ENCODE measurements at regions of chr9 and their contacts with region 1.

Region 1: GRCh38 chr9:109110326-109111021 is 9.3 kb downstream of the TMEM245 start:
- DNase-seq: no peak
- H3K4me3 Mint-ChIP-seq: peak overlapping the region; percentile 44
- H3K27ac Mint-ChIP-seq: peak overlapping the region; percentile 75
- H3K4me1 Mint-ChIP-seq: peaks cover 82% of the 10 kb centered on the region
- H3K27me3 Mint-ChIP-seq: no peaks in the 10 kb centered on the region

Region 2: GRCh38 chr9:107243751-107244150 is 1866.7 kb before region 1 on chr9:
- CTCF ChIA-PET with region 1: no interaction called
- intact Hi-C with region 1: loop called (anchors 2 kb)
- DNase-seq: peak; percentile 79
- H3K4me3 Mint-ChIP-seq: no peak overlapping the region
- H3K27ac Mint-ChIP-seq: peak overlapping the region; percentile 73
- H3K4me1 Mint-ChIP-seq: peaks cover 33% of the 10 kb centered on the region
- H3K27me3 Mint-ChIP-seq: peaks cover 1% of the 10 kb centered on the region

Region 3: DNA sequence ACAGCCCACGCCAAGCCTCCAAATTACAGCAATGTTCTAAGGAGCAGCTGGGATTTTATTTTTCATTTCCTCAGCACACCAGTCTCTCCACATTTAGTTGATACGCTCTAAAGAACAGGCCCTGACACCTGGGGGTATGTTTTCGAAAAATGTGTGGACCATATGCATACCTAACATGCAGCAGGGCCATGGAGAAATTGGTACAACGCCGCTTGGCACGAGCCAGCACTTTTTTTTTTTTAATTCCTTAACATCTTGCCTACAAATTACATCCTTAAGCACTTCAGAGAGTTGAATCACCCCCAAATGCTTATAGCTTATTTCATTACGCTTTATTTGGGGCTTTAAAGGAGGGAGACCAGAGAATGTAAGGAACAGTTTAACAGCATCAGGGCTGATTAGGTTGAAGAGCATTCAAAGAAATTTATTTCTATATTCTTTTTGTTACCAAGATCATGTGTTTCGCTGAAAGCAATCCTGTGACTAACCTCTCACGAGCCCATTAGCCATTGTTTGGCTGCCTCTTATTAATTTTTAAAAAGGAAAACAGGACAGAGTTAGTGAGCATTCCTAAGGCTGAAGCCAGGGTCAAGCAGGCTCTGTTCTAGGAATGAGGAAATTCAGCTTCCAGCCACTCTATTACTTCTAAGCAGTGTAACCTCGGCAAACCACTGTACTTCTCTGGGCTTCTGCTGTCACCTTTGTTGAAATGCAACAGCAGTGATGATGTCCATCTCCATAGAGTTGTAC is 428.4 kb before region 1 on chr9:
- CTCF ChIA-PET with region 1: no interaction called
- intact Hi-C with region 1: no loop called
- DNase-seq: no peak
- H3K4me3 Mint-ChIP-seq: no peak overlapping the region
- H3K27ac Mint-ChIP-seq: no peak overlapping the region
- H3K4me1 Mint-ChIP-seq: no peaks in the 10 kb centered on the region
- H3K27me3 Mint-ChIP-seq: no peaks in the 10 kb centered on the region

Region 4: DNA sequence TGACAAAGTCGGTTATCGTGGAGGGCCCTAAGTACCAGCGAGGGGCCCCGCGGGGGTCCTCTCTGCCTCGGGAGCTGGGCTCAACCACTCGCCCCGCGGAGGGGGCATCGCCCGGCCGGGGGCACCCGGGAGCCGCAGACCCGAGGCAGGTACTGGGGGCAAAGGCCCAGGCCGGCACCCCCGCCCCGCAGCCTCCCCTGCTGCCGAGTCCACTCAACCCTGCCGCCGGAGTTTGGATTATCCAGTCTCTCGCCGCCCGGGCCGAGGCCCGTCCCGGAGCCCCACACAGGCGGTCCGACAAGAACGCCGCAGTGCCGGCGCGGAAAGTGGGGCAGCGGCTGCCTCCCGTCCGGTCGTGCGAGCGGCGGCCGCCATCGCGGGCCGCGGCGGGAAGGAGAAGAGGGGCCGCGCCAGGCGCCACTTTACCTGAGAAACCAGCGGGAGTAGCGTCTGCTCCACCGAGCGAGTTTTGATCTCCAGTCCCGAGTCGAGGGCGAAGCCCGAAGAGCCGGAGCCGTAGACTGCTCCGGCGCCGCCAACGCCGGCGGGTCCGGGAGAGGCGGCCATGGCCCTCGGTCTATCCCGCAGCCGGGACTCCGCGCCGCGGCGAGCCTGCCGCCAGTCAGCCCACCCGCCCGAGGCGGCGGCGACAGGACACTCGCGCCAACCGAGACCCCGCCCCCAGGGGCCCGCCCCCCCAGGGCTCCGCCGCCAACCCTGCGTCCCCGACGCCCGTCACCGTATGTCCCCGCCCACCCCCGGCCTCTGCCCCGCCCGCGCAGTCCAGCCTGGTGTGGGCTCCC is 97.4 kb before region 1 on chr9 and contains the start of gene CTNNAL1:
- CTCF ChIA-PET with region 1: interaction called, 3 read pairs
- intact Hi-C with region 1: loop called (anchors 1 kb)
- DNase-seq: peak; percentile 86
- H3K4me3 Mint-ChIP-seq: peak within 1 kb of the TSS; percentile 95
- H3K27ac Mint-ChIP-seq: peak within 1 kb of the TSS; percentile 68
- H3K4me1 Mint-ChIP-seq: peaks cover 28% of the 10 kb centered on the region
- H3K27me3 Mint-ChIP-seq: no peaks in the 10 kb centered on the region
- total RNA-seq, gene CTNNAL1: 18.4 to 19.0 TPM

Region 5: DNA sequence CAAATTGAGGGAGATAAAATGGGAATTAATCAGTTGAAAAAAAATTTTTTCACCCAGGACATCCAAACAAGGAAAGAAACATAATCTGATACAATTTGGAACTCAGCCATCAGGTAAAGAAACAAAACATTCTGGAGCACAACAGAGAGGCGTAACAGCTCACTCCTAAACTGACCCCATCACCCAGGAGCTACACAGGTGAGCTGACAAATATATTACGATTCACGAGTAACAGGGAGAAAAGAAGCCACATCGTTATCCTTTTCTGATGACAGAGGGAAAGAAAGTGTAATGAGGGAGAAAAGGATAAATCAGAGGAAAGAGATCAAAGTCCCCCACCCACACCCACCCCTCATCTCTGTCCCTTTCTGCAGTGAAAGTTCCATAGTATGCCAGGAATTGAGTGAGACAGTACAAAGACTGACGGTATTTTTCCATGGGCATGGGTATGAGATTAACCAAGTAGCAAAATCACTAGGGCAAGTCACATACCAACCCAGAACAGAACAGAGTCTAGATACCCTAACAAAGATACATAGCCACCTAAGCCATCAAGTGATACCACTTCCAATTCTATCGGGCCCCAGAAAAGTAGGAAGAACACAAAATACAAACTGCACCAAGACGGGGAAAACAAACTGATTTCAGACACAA is 36.1 kb before region 1 on chr9:
- CTCF ChIA-PET with region 1: no interaction called
- intact Hi-C with region 1: no loop called
- DNase-seq: no peak
- H3K4me3 Mint-ChIP-seq: no peak overlapping the region
- H3K27ac Mint-ChIP-seq: peak overlapping the region; percentile 16
- H3K4me1 Mint-ChIP-seq: peaks cover 10% of the 10 kb centered on the region
- H3K27me3 Mint-ChIP-seq: no peaks in the 10 kb centered on the region

Region 6: GRCh38 chr9:109092051-109092580 is 18.4 kb before region 1 on chr9:
- CTCF ChIA-PET with region 1: interaction called, 5 read pairs
- intact Hi-C with region 1: loop called (anchors 1 kb)
- DNase-seq: no peak
- H3K4me3 Mint-ChIP-seq: no peak overlapping the region
- H3K27ac Mint-ChIP-seq: no peak overlapping the region
- H3K4me1 Mint-ChIP-seq: peaks cover 49% of the 10 kb centered on the region
- H3K27me3 Mint-ChIP-seq: no peaks in the 10 kb centered on the region

Region 7: GRCh38 chr9:109182940-109183798 is 72.7 kb after region 1 on chr9:
- CTCF ChIA-PET with region 1: no interaction called
- intact Hi-C with region 1: loop called (anchors 2 kb)
- DNase-seq: peak; percentile 23
- H3K4me3 Mint-ChIP-seq: no peak overlapping the region
- H3K27ac Mint-ChIP-seq: no peak overlapping the region
- H3K4me1 Mint-ChIP-seq: peaks cover 15% of the 10 kb centered on the region
- H3K27me3 Mint-ChIP-seq: peaks cover 3% of the 10 kb centered on the region

Region 8: GRCh38 chr9:109887079-109887478 is 776.6 kb after region 1 on chr9:
- CTCF ChIA-PET with region 1: no interaction called
- intact Hi-C with region 1: loop called (anchors 2 kb)
- DNase-seq: no peak
- H3K4me3 Mint-ChIP-seq: no peak overlapping the region
- H3K27ac Mint-ChIP-seq: peak overlapping the region; percentile 96
- H3K4me1 Mint-ChIP-seq: peaks cover 61% of the 10 kb centered on the region
- H3K27me3 Mint-ChIP-seq: no peaks in the 10 kb centered on the region

Region 9: GRCh38 chr9:109894921-109895758 is 784.7 kb after region 1 on chr9:
- CTCF ChIA-PET with region 1: no interaction called
- intact Hi-C with region 1: loop called (anchors 2 kb)
- DNase-seq: peak; percentile 89
- H3K4me3 Mint-ChIP-seq: peak overlapping the region; percentile 45
- H3K27ac Mint-ChIP-seq: peak overlapping the region; percentile 92
- H3K4me1 Mint-ChIP-seq: peaks cover 36% of the 10 kb centered on the region
- H3K27me3 Mint-ChIP-seq: no peaks in the 10 kb centered on the region

Measured in activated naive CD4-positive, alpha-beta T cell treated with anti-CD3 and anti-CD28 coated beads for 36 hours (primary cell).